ENCODE measurements at regions of chr7 and their contacts with region 1.

Region 1: DNA sequence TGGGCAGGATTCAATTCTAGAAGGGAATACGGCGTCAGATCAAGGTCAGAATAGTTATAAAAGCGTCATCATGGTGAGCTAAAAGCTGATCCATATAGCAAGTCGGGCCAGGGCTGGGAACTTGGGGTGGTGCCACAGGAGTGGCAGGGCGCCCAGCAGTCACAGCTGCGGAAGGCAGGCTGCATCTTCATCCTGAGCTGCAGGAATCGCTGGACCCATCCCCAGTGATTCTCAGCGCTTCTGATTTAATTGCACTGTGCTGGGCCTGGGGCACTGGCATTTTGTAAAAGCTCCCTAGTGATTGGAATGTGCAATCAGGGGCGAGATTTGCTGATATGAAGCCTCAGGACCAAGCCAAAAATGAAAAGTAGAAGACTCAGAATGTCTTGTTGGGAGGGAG is 135.3 kb downstream of the CTTNBP2 start:
- DNase-seq: no peak
- H3K4me3 ChIP-seq: no peak overlapping the region
- H3K27ac ChIP-seq: no peak overlapping the region
- H3K4me1 ChIP-seq: no peaks in the 10 kb centered on the region
- H3K27me3 ChIP-seq: no peaks in the 10 kb centered on the region
- CTCF ChIP-seq: no peak

Region 2: DNA sequence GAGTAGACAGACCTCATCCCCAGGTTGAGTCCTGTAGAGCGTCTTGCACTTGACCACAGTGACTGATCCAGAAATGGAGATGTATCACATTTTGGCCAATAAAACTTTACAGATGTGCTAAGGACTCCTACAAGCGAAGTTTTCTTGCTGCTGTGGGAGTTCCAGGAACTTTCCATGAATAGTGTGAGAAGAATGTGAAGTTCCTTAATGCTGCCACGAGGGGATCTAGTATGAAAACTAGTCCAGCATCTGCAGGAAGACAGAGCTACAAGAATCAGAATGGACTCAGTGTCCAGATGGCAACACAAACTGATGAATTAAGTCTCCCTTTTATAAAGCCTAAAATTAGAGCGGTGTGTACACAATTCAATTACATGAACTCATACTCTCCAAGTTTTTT is 431.2 kb after region 1 on chr7:
- CTCF ChIA-PET with region 1: no interaction called
- POLR2A ChIA-PET with region 1: no interaction called
- intact Hi-C with region 1: loop called (anchors 5 kb)
- DNase-seq: no peak
- H3K4me3 ChIP-seq: no peak overlapping the region
- H3K27ac ChIP-seq: no peak overlapping the region
- H3K4me1 ChIP-seq: no peaks in the 10 kb centered on the region
- H3K27me3 ChIP-seq: no peaks in the 10 kb centered on the region
- CTCF ChIP-seq: no peak

Measured in PC-9 (cell line).